ENCODE measurements at regions of chr12 and their contacts with region 1.

Region 1: DNA sequence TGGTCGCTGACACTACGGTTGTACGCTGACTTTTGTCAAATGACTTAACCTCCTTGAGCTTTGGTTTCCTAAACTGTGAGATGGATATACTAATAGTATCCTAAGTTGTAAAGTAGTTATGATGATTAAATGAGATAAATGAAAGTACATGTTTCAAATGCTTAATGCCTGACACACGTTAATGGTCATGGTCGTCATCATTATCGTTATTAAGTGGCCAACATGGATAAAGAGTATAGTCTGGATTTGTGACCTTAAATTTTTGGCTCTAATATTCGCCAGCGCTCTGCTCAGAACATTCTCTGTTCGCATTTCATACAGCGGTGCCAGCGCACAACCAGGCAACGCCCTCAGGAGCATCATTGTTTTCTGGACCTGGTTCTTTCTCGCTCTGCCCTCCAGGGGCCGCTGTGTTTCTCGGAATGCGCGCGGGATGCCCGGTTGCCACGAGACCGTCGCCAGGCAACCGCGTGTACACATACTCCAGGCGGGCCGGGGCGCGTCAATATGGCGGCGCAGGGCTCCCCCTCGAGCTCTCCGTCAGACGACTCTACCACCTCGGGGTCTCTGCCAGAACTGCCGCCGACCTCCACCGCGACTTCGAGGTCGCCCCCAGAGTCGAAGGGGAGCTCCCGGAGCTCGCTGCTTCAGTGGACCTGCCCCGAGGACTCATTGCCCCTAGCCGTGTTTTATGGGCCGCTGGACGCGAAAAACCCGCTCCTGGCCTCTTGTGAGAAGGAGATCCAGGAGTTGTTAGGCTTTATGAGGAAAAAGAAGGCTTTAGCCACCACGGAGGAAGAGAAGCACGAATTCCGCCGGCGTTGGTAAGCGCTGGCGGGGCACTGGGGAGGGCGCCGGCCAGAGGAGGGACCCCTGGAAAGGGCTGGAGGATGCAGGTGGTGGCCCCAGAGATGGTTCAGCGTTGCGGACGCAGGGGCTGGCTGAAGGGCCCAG is at the start of gene CFAP54:
- DNase-seq: peak; percentile 96 to 98
- ATAC-seq: peak; percentile 98
- H3K4me3 ChIP-seq: peak within 1 kb of the TSS; percentile 47 to 72
- H3K27ac ChIP-seq: peak within 1 kb of the TSS in 1 of 2 donors; percentile 73
- H3K4me1 ChIP-seq: no peaks in the 10 kb centered on the region
- H3K27me3 ChIP-seq: no peaks in the 10 kb centered on the region
- total RNA-seq, gene CFAP54: 0.91 to 2.2 TPM

Region 2: DNA sequence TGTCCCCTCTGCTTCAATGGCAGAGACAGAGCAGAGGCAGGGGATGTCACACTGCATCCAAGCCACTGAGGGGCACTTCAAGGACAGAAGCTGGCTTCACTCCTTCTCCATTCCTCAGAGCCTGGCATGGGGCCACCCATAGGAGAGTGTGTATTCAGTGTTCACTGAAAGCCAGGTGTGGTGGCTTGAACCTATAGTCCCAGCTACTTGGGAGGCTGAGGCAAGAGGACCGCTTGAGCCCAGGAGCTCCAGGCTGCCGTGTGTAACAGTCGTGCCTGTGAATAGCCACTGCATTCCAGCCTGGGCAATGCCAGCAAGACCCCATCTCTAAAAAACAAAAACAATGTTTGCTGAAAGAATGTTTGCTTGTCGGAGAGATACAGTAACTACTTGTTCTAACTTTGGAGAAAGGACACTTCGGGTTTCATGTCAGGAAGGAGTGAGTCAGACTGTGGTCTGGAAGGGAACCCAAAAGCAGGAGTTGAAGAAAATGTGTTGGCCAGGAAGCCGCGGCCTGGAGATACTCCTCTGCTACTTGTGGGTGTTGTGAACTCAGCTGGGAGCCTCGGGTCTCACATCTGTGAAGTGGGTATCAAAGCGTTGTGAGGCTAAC is 251.8 kb before region 1 on chr12:
- intact Hi-C with region 1: loop called in 1 of 2 experiments (anchors 10 kb)
- DNase-seq: peak; percentile 83 to 87
- ATAC-seq: peak; percentile 43
- H3K4me3 ChIP-seq: no peak overlapping the region
- H3K27ac ChIP-seq: no peak overlapping the region
- H3K4me1 ChIP-seq: peaks cover 0 to 2% of the 10 kb centered on the region in 2 donors
- H3K27me3 ChIP-seq: no peaks in the 10 kb centered on the region

Region 3: DNA sequence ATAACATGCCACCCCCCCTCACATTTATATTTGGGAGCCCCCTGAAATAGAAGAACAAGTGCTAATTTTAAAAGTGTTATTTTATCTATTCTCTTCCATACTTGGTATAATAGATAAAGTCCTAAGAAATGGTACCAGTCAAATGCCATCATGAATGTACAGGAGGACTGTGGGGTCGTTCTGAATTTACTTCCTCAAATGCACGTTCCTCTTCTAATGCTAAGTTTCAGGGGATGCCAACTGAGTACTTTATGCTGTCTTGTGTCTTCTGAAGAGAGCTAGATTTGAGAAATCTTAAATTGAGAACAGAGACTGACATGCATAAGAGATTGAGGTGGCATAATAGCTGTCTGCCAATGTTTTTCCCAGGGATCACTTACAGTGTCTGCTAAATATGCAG is 59.0 kb after region 1 on chr12:
- intact Hi-C with region 1: no loop called
- DNase-seq: no peak
- ATAC-seq: no peak
- H3K4me3 ChIP-seq: no peak overlapping the region
- H3K27ac ChIP-seq: no peak overlapping the region
- H3K4me1 ChIP-seq: no peaks in the 10 kb centered on the region
- H3K27me3 ChIP-seq: no peaks in the 10 kb centered on the region